ENCODE measurements at regions of chr12 and their contacts with region 1.

Region 1: DNA sequence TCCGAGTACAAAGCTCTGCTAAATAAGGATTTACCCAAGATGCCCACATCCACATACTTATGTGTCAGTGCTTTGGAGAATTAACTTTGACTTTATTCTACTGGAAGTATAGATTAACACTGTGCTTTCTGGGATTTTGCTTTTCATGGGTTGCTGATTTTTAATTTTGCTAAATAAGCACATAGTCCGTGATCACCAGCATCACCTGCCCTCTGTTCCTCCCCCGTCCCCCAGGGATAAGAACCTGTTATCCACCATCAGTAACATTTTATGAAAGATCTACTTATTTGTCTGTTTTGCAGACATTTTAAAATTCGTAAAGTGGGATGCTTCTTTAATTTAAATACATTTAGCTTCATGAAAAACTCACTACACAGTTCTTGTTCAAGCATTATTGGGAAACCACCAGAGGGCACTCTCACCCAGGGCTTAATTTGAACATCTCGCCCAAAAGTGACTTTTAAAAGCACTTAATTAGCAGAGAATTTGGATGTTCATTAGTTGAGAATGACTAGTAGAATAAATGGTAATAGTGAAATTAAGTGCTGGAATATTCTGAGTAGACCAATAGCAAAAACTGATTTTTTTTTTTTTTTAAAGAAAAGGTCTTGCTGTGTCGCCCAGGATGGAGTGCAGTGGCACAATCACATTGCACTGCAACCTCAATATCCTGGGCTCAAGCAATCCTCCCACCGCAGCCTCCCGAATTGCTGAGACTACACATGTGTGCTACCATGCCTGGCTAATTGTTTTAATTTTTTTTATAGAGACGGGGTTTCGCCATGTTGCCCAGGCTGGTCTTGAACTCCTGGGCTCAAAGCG is 35.7 kb downstream of the MRPL42 start:
- DNase-seq: peak; percentile 64
- H3K4me3 Mint-ChIP-seq: no peak overlapping the region
- H3K27ac Mint-ChIP-seq: no peak overlapping the region
- H3K4me1 Mint-ChIP-seq: peaks cover 10% of the 10 kb centered on the region
- H3K27me3 Mint-ChIP-seq: no peaks in the 10 kb centered on the region

Region 2: GRCh38 chr12:93403988-93404803 is 98.8 kb before region 1 on chr12:
- CTCF ChIA-PET with region 1: no interaction called
- POLR2A ChIA-PET with region 1: no interaction called
- intact Hi-C with region 1: no loop called
- DNase-seq: no peak
- H3K4me3 Mint-ChIP-seq: no peak overlapping the region
- H3K27ac Mint-ChIP-seq: peak overlapping the region; percentile 36
- H3K4me1 Mint-ChIP-seq: peaks cover 44% of the 10 kb centered on the region
- H3K27me3 Mint-ChIP-seq: no peaks in the 10 kb centered on the region

Region 3: GRCh38 chr12:93484315-93484981 is 18.6 kb before region 1 on chr12:
- CTCF ChIA-PET with region 1: interaction called, 10 read pairs
- POLR2A ChIA-PET with region 1: no interaction called
- intact Hi-C with region 1: no loop called
- DNase-seq: no peak
- H3K4me3 Mint-ChIP-seq: no peak overlapping the region
- H3K27ac Mint-ChIP-seq: no peak overlapping the region
- H3K4me1 Mint-ChIP-seq: no peaks in the 10 kb centered on the region
- H3K27me3 Mint-ChIP-seq: no peaks in the 10 kb centered on the region

Region 4: DNA sequence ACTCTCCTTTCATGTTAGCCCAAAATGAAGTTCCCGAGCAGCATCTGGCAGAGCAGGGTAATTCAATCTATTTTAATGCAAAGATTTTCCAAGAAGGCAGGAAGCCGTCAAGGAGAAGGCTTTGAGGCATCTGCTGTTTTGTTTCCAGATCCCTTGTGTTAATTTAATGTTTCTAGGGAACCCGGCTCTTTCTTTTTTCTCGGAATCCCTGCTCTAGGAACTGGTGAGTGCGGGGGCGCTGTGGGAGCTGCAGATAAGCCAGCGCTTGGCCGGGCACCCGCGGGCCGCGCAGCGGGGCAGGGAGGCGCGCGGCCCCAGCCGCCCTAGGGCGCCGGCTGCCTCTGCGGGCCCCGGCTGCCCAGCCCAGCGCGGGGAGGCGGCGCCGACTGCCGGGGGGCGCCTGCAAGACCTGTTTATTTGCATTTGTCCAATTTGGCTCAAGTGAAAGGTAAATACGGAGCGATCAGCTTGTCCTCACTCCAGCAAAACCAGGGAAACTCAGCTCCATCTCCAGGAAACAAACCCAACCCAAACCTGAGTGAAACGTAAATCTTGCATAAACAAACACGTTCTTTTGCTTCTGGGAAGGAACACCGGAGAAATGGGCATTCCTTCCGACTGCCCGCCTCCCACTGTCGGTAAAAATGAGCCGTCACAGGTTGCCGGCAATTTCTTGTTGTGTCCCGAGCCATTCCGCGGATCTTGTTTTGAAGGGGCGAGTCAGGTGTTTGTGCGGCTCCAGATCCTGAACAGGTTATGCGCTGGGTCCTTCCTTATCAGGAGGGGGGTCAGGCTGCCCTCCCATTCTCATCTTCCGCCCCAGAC is 239.3 kb after region 1 on chr12:
- CTCF ChIA-PET with region 1: interaction called, 3 read pairs
- POLR2A ChIA-PET with region 1: no interaction called
- intact Hi-C with region 1: loop called (anchors 2 kb)
- DNase-seq: peak; percentile 77
- H3K4me3 Mint-ChIP-seq: peak overlapping the region; percentile 74
- H3K27ac Mint-ChIP-seq: peak overlapping the region; percentile 81
- H3K4me1 Mint-ChIP-seq: peaks cover 35% of the 10 kb centered on the region
- H3K27me3 Mint-ChIP-seq: no peaks in the 10 kb centered on the region

Region 5: GRCh38 chr12:93979189-93979588 is 476.2 kb after region 1 on chr12:
- CTCF ChIA-PET with region 1: interaction called, 10 read pairs
- POLR2A ChIA-PET with region 1: no interaction called
- intact Hi-C with region 1: loop called (anchors 2 kb)
- DNase-seq: peak; percentile 26
- H3K4me3 Mint-ChIP-seq: no peak overlapping the region
- H3K27ac Mint-ChIP-seq: no peak overlapping the region
- H3K4me1 Mint-ChIP-seq: peaks cover 6% of the 10 kb centered on the region
- H3K27me3 Mint-ChIP-seq: no peaks in the 10 kb centered on the region

Region 6: DNA sequence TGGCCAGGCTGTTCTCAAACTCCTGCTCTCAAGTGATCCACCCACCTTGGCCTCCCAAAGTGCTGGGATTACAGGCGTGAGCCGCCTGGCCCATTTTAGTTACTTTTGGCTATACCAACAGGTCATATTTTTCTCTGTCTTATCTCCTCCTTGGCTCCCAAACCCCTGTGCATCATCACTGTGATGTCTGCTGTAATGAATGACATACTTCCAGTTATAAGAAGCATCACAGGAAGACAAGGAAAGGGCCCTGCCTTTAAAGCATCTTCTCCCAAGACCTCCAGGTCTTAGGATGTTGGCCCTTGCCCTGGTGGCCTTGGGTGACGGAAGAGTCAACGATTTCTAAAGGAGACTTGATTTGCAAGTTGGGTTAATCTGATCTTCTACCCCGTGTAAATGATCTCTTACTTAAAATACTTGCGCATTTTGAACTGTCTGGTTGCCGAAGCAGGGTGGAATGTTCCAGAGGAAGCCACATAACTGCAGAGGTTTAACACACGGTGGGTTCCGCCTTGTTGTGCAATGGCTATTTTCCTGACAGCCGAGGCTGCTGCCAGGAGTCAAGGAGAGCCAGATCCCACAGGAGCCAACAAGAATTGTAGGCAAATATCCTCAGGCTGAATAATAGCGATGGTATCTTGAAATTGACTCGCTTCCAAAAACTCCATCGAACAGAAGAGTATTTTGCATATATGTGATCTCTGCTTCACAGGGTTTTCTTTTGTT is 589.7 kb after region 1 on chr12:
- CTCF ChIA-PET with region 1: interaction called, 10 read pairs
- POLR2A ChIA-PET with region 1: no interaction called
- intact Hi-C with region 1: no loop called
- DNase-seq: no peak
- H3K4me3 Mint-ChIP-seq: no peak overlapping the region
- H3K27ac Mint-ChIP-seq: no peak overlapping the region
- H3K4me1 Mint-ChIP-seq: no peaks in the 10 kb centered on the region
- H3K27me3 Mint-ChIP-seq: no peaks in the 10 kb centered on the region